ENCODE measurements at regions of chr5 and their contacts with region 1.

Region 1: DNA sequence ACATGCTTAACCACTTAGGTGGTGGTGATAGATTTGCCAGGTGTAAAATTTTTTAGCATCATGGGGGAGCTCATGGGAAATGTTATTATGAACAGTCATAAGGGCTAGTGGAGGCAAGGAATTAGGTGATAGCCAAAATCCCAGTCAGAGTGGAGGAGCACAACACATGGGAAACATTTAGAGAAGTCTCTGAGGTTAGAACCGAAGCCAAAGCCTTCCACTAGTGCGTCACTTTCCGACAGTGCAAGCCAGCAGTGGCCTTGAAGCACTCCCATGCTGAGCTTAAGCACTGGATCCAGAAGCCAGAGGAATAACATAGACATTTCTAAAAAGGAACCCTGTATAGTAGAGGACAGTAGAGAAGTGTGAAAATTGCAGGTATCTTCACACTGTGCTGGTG is 101.5 kb upstream of the SNX2 start:
- DNase-seq: peak in 1 of 2 donors; percentile 50
- ATAC-seq: peak; percentile 61 to 97 (median 92)
- H3K4me3 ChIP-seq: no peak overlapping the region
- H3K27ac ChIP-seq: no peak overlapping the region
- H3K4me1 ChIP-seq: peaks cover 0 to 5% (median 0%) of the 10 kb centered on the region in 9 donors
- H3K27me3 ChIP-seq: peaks cover 0 to 13% (median 0%) of the 10 kb centered on the region in 7 donors
- CTCF ChIP-seq: no peak

Region 2: GRCh38 chr5:122629121-122629677 is 44.1 kb before region 1 on chr5:
- intact Hi-C with region 1: no loop called
- DNase-seq: no peak
- ATAC-seq: no peak
- H3K4me3 ChIP-seq: no peak overlapping the region
- H3K27ac ChIP-seq: no peak overlapping the region
- H3K4me1 ChIP-seq: no peaks in the 10 kb centered on the region
- H3K27me3 ChIP-seq: no peaks in the 10 kb centered on the region
- CTCF ChIP-seq: no peak

Region 3: DNA sequence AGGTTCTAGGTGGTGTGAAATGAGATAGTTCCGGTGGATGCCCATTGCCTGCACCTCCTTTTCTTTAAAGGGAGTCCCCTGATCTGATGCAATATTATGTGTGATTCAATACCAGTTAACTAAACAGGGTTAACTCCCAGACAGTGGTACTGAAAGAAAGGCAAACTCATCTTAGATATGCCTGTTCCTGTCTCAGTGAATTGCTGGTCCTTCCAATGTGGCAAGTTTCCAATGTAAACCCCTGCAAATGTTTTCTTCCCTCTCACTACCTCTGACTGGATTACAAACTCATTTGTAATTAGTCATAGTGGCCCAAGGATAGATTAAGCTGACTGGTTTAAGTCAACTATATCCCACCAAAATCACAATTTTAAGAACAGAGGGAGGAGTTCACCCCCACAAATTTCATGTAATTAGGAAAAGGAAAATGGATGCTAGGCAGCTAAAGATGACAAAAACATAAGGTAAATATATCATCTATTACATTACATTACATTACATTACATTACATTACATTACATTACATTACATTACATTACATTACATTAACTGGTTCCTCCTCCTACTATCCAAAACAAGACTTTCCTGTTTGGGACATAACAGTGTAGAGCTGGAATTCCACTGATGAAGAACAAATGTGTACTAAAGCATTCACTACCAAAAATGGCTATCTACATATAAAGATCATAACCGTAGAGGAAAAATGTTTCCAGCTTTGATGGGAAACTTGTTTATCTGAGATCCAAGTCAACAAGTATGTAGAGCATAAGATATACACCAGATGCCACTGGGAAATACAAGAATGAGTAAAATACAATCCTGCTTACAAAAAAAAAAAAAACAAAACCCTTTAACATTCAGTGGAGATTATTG is 20.0 kb before region 1 on chr5:
- intact Hi-C with region 1: loop called in 1 of 10 experiments (anchors 1 kb)
- DNase-seq: no peak
- ATAC-seq: no peak
- H3K4me3 ChIP-seq: no peak overlapping the region
- H3K27ac ChIP-seq: no peak overlapping the region
- H3K4me1 ChIP-seq: no peaks in the 10 kb centered on the region
- H3K27me3 ChIP-seq: peaks cover 0 to 3% (median 0%) of the 10 kb centered on the region in 7 donors
- CTCF ChIP-seq: no peak

Measured in heart right ventricle (tissue), 16 donors.